ENCODE measurements at regions of chr6 and their contacts with region 1.

Region 1: GRCh38 chr6:38018755-38019165 is 199.2 kb downstream of the ZFAND3 start:
- DNase-seq: no peak
- ATAC-seq: no peak
- H3K4me3 ChIP-seq: no peak overlapping the region
- H3K27ac ChIP-seq: no peak overlapping the region
- H3K4me1 ChIP-seq: peaks cover 26% of the 10 kb centered on the region
- H3K27me3 ChIP-seq: no peaks in the 10 kb centered on the region
- CTCF ChIP-seq: no peak

Region 2: GRCh38 chr6:37791156-37791919 is 227.4 kb before region 1 on chr6:
- intact Hi-C with region 1: loop called (anchors 5 kb)
- DNase-seq: peak; percentile 93 to 96
- ATAC-seq: peak; percentile 89 to 96 (median 93)
- H3K4me3 ChIP-seq: no peak overlapping the region
- H3K27ac ChIP-seq: peak overlapping the region; percentile 46
- H3K4me1 ChIP-seq: peaks cover 24% of the 10 kb centered on the region
- H3K27me3 ChIP-seq: no peaks in the 10 kb centered on the region
- CTCF ChIP-seq: peak; percentile 96